Right ventricle myocardium inferior (tissue), 1 donor: ENCODE measurements at regions of chr2 and their contacts with region 1.

Region 1: DNA sequence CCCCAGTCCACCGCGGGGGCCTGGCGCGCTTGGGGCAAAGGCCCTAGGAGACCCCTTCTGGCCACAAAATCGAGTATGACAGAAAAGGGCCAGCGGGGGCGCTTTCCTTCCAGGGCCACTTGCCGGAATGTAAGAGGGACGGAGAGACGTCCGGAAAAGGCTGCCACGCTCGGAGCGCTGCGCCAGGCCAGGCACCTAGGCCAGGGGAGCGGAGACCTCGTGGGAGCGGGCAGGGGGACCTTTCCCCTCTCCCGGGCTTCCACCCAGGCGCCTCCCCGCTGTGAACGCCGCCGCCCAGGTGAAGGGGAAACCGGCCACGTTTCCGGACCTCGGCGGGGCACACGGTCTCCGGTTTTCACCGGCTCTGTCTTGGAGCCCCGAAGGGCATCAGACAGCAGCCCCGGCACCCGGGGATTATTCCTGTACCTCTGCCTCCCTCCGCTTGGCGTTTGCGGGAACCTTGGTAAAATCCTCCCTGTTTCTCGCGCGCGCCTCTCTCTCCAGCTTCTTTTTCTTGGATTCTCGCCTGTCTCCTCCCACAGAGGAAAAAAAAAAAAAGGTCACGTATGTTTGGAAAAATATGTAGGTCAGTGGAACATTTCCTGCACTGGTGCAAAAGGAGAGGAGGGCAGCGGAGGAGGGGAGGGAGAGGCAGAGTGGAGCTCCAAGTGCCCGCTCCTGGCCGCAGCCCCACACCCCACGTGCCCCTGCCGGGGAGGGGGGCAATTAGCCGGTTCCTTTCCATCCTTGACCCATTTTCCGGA is 1.2 kb upstream of the NPAS2 start:
- DNase-seq: no peak
- ATAC-seq: peak; percentile 66

Region 2: DNA sequence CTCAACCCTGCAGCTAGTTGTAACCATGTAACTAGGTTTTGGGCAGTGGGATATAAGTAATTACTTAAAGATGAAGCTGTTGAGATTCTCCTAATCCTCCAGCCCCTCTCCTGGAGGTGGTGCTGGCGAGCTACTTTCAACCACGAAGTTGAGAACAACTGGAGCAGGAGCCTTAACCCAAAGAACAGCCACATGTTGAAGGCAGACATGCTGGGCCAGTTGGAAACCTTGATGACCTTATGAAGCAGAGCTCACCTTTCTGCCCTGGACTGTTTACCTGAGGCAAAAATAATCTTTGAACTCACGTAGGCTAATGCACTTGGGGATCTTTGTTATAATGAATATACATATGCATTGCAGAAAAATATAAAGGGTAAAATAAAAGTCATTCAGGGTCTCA is 88.4 kb before region 1 on chr2:
- intact Hi-C with region 1: loop called (anchors 2 kb)
- DNase-seq: no peak
- ATAC-seq: peak; percentile 69

Region 3: DNA sequence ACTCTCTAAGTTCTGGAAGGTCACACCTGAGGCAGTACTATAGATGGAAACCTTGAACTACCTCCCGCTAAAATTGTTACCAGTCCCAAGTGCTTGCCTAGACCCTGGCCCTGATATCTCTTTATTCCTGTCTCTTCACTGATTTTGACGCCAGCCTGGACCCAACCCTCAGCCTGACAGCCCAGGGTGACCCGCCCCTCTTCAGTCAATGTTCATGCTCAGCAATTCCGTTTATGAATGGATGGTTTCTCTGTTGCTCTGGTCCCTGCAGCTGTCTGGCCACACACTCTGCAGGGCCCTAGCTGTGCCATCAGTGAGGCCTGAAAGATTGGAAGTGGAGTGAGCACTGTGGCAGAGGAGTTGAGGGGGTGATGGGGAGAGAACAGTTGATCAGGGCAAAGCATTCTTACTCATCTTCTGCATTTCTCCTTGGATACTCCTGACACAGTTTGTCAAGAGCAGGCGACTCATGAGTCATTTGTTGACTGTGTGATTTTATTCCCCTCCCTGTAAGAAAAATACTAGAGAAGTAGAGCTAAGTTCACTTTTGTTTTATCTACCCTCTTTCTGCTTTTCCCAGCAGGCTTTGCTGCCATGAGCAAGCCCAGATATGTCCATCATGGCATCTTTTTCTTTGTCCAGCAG is 47.1 kb after region 1 on chr2:
- intact Hi-C with region 1: no loop called
- DNase-seq: no peak
- ATAC-seq: no peak

Region 4: GRCh38 chr2:100878000-100878791 is 59.4 kb after region 1 on chr2:
- intact Hi-C with region 1: loop called (anchors 1 kb)
- DNase-seq: no peak
- ATAC-seq: peak; percentile 78

Region 5: GRCh38 chr2:100909534-100910081 is 90.8 kb after region 1 on chr2:
- intact Hi-C with region 1: loop called (anchors 5 kb)
- DNase-seq: no peak
- ATAC-seq: no peak

Region 6: DNA sequence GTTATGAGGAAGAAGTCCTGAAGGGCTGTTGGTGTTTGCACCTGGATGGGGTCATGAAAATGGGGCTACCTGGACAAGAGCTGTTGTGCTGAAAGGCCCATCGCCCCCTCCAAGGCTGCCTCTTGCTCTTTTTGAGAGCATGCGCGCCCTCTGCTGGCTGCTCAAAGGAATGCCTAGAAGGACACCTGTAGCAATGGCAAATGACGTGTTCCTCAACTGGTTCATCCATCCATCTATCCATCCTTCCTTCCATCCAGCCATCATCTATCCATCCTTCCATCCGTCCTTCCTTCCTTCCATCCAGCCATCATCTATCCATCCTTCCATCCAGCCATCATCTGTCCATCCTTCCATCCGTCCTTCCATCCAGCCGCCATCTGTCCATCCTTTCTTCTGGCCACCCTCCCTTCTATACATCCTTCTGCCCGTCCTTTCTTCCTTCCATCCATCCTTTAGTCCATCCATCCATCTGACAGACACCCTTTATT is 166.1 kb after region 1 on chr2:
- intact Hi-C with region 1: loop called (anchors 5 kb)
- DNase-seq: peak; percentile 90
- ATAC-seq: peak; percentile 66